MCF 10A (cell line): ENCODE measurements at regions of chr22 and their contacts with region 1.

Region 1: GRCh38 chr22:41800348-41801146 is at the start of gene CCDC134:
- DNase-seq: peak; percentile 83
- H3K4me3 Mint-ChIP-seq: peak within 1 kb of the TSS; percentile 84
- H3K27ac Mint-ChIP-seq: peak within 1 kb of the TSS; percentile 91
- H3K4me1 Mint-ChIP-seq: peaks cover 14% of the 10 kb centered on the region
- H3K27me3 Mint-ChIP-seq: no peaks in the 10 kb centered on the region
- CTCF ChIP-seq: no peak
- total RNA-seq, gene CCDC134: 4.0 and 4.3 TPM in 2 replicates

Region 2: DNA sequence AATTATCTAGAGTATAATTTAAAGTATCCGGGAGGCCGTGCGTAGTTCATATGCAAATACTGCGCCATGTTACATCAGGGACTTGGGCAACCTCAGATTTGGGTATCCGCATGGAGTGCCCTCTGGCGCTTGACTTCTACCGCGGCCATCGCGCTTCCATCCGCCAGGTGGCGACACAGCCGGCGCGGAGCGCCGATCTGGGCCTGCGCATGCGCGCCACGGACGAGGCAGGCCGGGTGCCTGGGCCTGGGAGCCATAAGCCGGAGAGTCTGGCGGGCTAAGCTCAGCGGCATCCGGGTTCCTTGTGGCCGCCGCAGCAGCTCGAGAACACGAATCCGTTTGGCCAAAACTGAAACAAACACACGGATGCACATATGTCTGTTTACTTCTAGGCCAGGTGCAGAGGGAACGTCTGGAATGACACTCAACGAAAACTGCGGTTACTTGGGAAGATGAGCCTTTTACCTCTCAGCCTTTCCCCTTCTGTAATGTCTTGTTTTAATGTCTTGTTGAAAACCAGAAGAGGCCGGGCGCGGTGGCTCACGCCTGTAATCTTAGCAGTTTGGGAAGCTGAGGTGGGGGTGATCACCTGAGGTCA is 133.8 kb before region 1 on chr22:
- CTCF ChIA-PET with region 1: no interaction called
- POLR2A ChIA-PET with region 1: interaction called, 13 read pairs
- intact Hi-C with region 1: no loop called
- DNase-seq: peak; percentile 91
- H3K4me3 Mint-ChIP-seq: peak overlapping the region; percentile 64
- H3K27ac Mint-ChIP-seq: peak overlapping the region; percentile 93
- H3K4me1 Mint-ChIP-seq: peaks cover 5% of the 10 kb centered on the region
- H3K27me3 Mint-ChIP-seq: no peaks in the 10 kb centered on the region
- CTCF ChIP-seq: peak; percentile 92

Region 3: GRCh38 chr22:41688365-41689211 is 112.0 kb before region 1 on chr22 and contains the start of gene SNU13:
- CTCF ChIA-PET with region 1: no interaction called
- POLR2A ChIA-PET with region 1: interaction called, 10 read pairs
- intact Hi-C with region 1: no loop called
- DNase-seq: peak; percentile 92
- H3K4me3 Mint-ChIP-seq: peak within 1 kb of the TSS; percentile 96
- H3K27ac Mint-ChIP-seq: peak within 1 kb of the TSS; percentile 97
- H3K4me1 Mint-ChIP-seq: peaks cover 12% of the 10 kb centered on the region
- H3K27me3 Mint-ChIP-seq: no peaks in the 10 kb centered on the region
- CTCF ChIP-seq: no peak
- total RNA-seq, gene SNU13: 280 and 286 TPM in 2 replicates

Region 4: DNA sequence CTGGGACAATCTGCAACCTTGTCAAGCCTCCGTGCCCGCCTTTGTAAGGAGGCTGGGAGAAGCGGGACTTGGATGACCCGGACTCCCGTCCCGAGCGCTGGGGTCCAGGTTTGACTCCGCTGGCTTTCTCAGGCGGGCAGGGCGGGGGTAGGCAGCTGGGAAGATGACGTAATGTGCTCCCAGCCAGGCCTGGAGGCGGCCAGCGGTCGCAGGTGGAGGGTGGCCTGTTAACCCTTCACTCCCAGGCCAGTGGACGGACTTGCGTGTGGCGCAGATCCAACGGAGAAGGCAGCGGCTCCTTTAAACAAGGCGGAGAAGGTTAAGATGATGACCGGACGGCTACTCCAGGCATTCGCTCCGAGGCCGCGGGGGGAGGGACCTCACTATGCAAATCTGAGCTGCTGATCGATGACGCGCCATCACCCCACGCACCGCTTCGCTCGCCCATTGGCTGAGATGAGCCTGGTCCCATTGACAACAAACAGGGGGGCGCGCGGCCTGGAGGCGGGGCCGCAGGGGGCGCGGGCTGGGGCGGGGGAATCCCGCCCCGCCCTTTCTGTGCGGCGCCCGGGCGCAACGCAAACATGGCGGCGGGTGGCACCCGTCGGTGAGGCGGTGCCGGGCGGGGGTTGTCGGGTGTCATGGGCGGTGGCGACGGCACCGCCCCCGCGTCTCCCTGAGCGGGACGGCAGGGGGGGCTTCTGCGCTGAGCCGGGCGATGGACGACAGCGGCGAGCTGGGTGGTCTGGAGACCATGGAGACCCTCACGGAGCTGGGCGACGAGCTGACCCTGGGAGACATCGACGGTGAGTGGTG is 32.2 kb after region 1 on chr22 and contains the start of gene SREBF2:
- CTCF ChIA-PET with region 1: interaction called, 3 read pairs
- POLR2A ChIA-PET with region 1: interaction called, 43 read pairs
- intact Hi-C with region 1: no loop called
- DNase-seq: peak; percentile 100
- H3K4me3 Mint-ChIP-seq: peak within 1 kb of the TSS; percentile 82
- H3K27ac Mint-ChIP-seq: peak within 1 kb of the TSS; percentile 98
- H3K4me1 Mint-ChIP-seq: peaks cover 17% of the 10 kb centered on the region
- H3K27me3 Mint-ChIP-seq: no peaks in the 10 kb centered on the region
- CTCF ChIP-seq: no peak
- total RNA-seq, gene SREBF2: 88.4 and 104 TPM in 2 replicates

Region 5: GRCh38 chr22:41857155-41857859 is 56.8 kb after region 1 on chr22:
- CTCF ChIA-PET with region 1: no interaction called
- POLR2A ChIA-PET with region 1: interaction called, 19 read pairs
- intact Hi-C with region 1: loop called (anchors 1 kb)
- DNase-seq: peak; percentile 94
- H3K4me3 Mint-ChIP-seq: peak overlapping the region; percentile 43
- H3K27ac Mint-ChIP-seq: peak overlapping the region; percentile 81
- H3K4me1 Mint-ChIP-seq: peaks cover 29% of the 10 kb centered on the region
- H3K27me3 Mint-ChIP-seq: no peaks in the 10 kb centered on the region
- CTCF ChIP-seq: peak; percentile 48

Region 6: GRCh38 chr22:42079319-42080251 is 279.0 kb after region 1 on chr22 and contains the start of gene SMDT1:
- CTCF ChIA-PET with region 1: no interaction called
- POLR2A ChIA-PET with region 1: interaction called, 10 read pairs
- intact Hi-C with region 1: no loop called
- DNase-seq: peak; percentile 99
- H3K4me3 Mint-ChIP-seq: peak within 1 kb of the TSS; percentile 92
- H3K27ac Mint-ChIP-seq: peak within 1 kb of the TSS; percentile 99
- H3K4me1 Mint-ChIP-seq: no peaks in the 10 kb centered on the region
- H3K27me3 Mint-ChIP-seq: no peaks in the 10 kb centered on the region
- CTCF ChIP-seq: no peak
- total RNA-seq, gene SMDT1: 76.9 and 96.7 TPM in 2 replicates